Dorsolateral prefrontal cortex (tissue), 120 donors: ENCODE measurements at regions of chr14 and their contacts with region 1.

Region 1: DNA sequence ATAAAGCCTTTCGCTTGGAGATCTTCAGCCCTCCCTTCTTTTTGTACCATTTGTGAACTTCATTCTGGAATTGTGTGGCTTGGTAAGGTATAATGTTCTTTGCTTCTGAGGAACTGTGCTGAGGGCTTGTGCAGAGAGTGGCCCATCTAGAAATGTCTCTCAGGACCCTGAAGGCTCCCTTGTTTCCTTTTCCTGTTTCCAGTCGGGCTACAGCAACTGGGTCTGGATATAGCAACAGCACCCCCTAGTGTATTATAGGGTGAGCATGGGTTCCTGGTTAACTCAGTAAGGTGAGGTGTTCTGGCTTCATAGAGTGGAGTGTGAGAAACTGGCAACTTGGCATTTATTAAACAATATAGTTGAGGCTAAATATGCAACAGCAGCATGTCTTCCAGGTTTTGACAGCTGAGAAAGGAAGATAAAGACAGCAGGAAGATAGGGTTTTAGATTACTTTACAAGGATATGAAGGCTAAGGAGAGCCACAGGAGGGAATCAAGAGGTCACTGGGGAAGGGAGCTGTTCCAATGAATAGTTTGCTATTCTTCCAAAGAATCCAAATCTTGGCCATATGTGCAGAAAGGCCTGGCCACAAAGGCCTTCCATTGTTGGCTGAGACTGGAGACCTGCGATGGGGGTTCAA is 49.1 kb upstream of the RNU6-8 start:
- DNase-seq: peak in 4 of 10 donors; percentile 22 to 73 (median 50)
- H3K4me3 ChIP-seq: peak overlapping the region in 7 of 59 donors; percentile 5 to 31 (median 8)
- H3K27ac ChIP-seq: peak overlapping the region in 45 of 59 donors; percentile 1 to 79 (median 56)
- H3K27me3 ChIP-seq: no peaks in the 10 kb centered on the region
- CTCF ChIP-seq: peak; percentile 54 to 98 (median 88)

Region 2: DNA sequence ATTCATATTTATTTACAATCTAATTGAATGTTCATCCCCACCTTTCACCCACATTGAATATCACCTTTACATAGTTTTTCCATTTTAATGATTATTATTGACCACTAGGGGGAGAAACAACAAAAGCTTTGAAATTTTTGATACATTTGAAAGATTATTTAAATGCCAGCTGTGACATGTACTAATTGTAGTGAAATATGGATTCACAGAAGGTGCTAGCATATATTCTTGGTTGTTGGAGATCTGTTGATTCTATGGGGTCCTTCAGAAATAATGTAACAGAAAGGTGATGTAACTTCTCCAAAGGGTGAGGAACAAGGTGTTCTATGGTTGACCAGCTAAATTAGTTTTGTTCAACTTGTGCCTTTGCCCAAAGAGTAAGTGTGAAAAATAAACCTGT is 741.9 kb before region 1 on chr14:
- intact Hi-C with region 1: loop called (anchors 2 to 5 kb)
- DNase-seq: no peak
- H3K4me3 ChIP-seq: no peak overlapping the region
- H3K27ac ChIP-seq: no peak overlapping the region
- H3K27me3 ChIP-seq: no peaks in the 10 kb centered on the region
- CTCF ChIP-seq: peak; percentile 59 to 97 (median 77)

Region 3: DNA sequence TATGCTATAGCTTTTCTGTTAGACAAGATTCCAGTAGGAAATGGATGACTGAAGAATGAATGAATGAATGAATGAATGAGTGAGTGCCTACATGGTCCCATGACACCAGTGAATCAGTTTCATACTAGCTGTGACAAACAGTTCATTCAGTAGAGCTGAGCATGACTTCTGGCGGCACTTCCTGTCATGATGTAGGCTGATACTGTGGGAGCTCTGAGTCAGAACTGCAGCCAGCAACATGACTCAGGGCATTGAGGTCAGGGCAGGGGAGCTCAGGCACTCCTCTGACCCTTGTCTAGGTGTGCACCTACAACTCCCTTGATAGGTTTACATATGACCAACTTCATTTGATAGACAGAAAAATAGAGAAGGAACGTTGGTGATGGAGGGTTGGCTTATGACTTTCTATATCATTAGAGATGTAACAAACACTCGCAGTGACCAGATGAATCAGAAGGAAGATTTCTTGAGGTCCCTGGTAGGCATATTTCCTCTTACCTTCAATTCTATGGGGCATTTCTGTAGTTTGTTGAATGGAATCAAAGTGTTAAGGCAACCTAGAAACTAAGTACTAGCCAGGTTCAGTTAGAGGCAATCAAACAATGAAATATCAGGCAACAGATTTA is 314.3 kb before region 1 on chr14:
- intact Hi-C with region 1: loop called in 1 of 2 experiments (anchors 5 kb)
- DNase-seq: peak in 5 of 10 donors; percentile 41 to 76 (median 64)
- H3K4me3 ChIP-seq: no peak overlapping the region
- H3K27ac ChIP-seq: no peak overlapping the region
- H3K27me3 ChIP-seq: no peaks in the 10 kb centered on the region
- CTCF ChIP-seq: no peak

Region 4: DNA sequence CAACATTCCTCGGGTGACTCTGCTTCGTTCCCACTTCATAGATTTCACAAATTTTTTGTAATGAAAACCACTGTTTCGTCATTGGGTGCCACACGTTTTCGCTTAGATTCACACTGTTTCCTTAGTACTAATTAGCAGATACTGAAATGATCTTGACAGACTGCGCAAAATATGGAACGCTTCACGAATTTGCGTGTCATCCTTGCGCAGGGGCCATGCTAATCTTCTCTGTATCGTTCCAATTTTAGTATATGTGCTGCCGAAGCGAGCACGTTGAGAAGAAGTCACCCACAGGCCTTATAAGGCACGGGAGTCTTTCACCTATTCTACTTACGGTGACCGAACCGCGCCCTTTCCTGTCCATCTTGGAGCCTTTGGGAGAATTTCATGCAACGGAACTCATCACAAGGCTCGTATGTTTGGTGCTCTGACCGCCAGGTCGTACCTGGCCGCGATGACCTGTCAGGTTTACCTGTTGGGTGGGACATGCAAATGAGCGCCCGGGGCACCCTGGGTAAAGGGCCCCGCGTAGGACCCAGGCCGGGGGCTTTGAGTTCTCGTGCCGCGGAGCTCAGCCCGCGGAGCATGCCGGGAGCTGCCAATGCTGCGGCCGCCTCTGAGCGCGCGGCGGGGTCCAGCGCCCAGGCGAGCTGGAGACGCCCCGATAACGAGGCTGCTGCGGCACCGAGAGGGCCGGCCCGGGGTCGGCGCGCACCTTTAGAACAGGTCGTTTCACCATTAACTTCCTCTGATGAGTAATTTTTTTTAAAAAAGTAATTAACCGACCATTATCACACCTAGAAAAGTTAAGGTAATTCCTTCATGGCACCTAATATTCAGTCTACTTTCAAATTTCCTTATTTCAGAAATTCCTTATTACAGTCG is 48.9 kb before region 1 on chr14 and contains the start of gene RNU6-8:
- intact Hi-C with region 1: loop called in 1 of 2 experiments (anchors 5 kb)
- DNase-seq: peak; percentile 84 to 96 (median 86)
- H3K4me3 ChIP-seq: peak within 1 kb of the TSS; percentile 51 to 92 (median 75)
- H3K27ac ChIP-seq: peak within 1 kb of the TSS; percentile 42 to 98 (median 88)
- H3K27me3 ChIP-seq: no peaks in the 10 kb centered on the region
- CTCF ChIP-seq: peak in 12 of 56 donors; percentile 4 to 33 (median 15)
- total RNA-seq, gene RNU6-8: not detected

Region 5: GRCh38 chr14:32382704-32383103 is 130.6 kb after region 1 on chr14:
- intact Hi-C with region 1: loop called in 1 of 2 experiments (anchors 5 kb)
- DNase-seq: peak in 7 of 10 donors; percentile 18 to 61 (median 52)
- H3K4me3 ChIP-seq: no peak overlapping the region
- H3K27ac ChIP-seq: peak overlapping the region in 39 of 59 donors; percentile 5 to 76 (median 50)
- H3K27me3 ChIP-seq: no peaks in the 10 kb centered on the region
- CTCF ChIP-seq: peak in 51 of 56 donors; percentile 14 to 68 (median 44)

Region 6: DNA sequence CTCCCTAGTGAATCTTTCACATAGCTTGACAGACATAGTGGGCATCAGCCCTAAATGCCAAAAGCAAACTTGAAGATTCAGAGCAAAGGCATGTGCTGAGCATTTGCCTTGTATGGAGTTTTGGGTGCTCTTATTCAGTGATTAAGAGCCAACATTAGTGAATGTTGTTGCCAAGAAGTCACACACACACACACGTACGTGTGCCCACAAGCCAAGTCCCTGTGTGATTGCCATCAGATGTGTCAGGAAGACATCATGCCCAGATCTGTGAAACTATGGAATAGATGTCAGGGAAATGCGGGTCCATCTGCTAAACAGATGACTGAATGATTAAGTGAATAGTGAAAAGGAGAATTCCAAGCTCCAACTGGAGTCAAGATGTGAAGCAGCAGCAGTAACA is 225.9 kb after region 1 on chr14:
- intact Hi-C with region 1: no loop called
- DNase-seq: no peak
- H3K4me3 ChIP-seq: no peak overlapping the region
- H3K27ac ChIP-seq: peak overlapping the region; percentile 11 to 99 (median 95)
- H3K27me3 ChIP-seq: no peaks in the 10 kb centered on the region
- CTCF ChIP-seq: no peak

Region 7: GRCh38 chr14:32509632-32510187 is 257.6 kb after region 1 on chr14:
- intact Hi-C with region 1: loop called in 1 of 2 experiments (anchors 5 kb)
- DNase-seq: peak; percentile 23 to 91 (median 85)
- H3K4me3 ChIP-seq: peak overlapping the region in 49 of 59 donors; percentile 5 to 61 (median 37)
- H3K27ac ChIP-seq: peak overlapping the region; percentile 80 to 100 (median 99)
- H3K27me3 ChIP-seq: no peaks in the 10 kb centered on the region
- CTCF ChIP-seq: peak in 14 of 56 donors; percentile 4 to 38 (median 16)